ENCODE measurements at regions of chr18 and their contacts with region 1.

Region 1: GRCh38 chr18:11808001-11808855 is 43.0 kb upstream of the CHMP1B start:
- DNase-seq: peak; percentile 53 to 92
- H3K4me3 ChIP-seq: no peak overlapping the region
- H3K27ac ChIP-seq: peak overlapping the region; percentile 79
- H3K4me1 ChIP-seq: peaks cover 27% of the 10 kb centered on the region
- H3K27me3 ChIP-seq: no peaks in the 10 kb centered on the region
- CTCF ChIP-seq: no peak

Region 2: DNA sequence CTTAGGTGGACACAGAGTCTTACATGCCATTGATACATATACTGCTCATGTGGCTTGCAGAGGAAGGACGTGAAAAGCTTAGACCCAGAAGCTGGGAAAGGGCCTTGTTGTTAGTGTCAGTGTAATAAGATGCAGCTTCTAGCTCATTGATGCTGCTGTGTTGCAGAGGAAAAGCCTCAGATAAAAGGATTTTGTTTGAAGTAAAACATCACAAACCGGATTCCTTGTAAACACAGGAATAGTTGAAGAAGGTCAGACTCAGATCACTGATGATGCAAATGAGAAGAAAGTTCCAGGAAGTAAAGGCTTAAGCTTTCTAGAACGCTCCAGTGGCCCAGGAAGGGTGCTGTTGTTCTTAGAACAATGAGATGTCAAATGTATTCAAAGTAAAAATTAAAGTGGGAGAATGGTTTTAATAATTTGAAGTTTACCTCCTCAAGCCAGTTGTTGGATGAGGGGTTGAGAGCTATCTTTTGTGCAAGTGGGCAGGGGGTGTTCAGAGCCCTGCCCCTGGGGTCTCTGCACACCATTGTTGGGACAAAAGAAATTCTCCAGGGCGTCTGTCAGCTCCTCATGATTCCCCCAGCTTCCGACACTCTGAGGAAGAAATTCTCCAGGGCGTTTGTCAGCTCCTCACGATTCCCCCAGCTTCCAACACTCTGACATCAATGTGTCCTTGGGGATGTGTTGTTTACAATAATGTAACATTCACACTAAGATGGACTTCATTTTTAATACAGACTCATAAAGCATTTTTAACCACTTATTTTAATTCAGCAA is 18.3 kb before region 1 on chr18:
- CTCF ChIA-PET with region 1: no interaction called
- POLR2A ChIA-PET with region 1: no interaction called
- intact Hi-C with region 1: no loop called
- DNase-seq: no peak
- H3K4me3 ChIP-seq: no peak overlapping the region
- H3K27ac ChIP-seq: no peak overlapping the region
- H3K4me1 ChIP-seq: no peaks in the 10 kb centered on the region
- H3K27me3 ChIP-seq: no peaks in the 10 kb centered on the region
- CTCF ChIP-seq: no peak

Region 3: GRCh38 chr18:11851146-11851805 is 43.0 kb after region 1 on chr18 and contains the start of gene CHMP1B:
- CTCF ChIA-PET with region 1: no interaction called
- POLR2A ChIA-PET with region 1: no interaction called
- intact Hi-C with region 1: loop called (anchors 1 kb)
- DNase-seq: peak; percentile 89 to 97
- H3K4me3 ChIP-seq: peak within 1 kb of the TSS; percentile 98
- H3K27ac ChIP-seq: peak within 1 kb of the TSS; percentile 83
- H3K4me1 ChIP-seq: peaks cover 39% of the 10 kb centered on the region
- H3K27me3 ChIP-seq: no peaks in the 10 kb centered on the region
- CTCF ChIP-seq: no peak
- total RNA-seq, gene CHMP1B: 68.0 and 73.6 TPM in 2 replicates

Region 4: DNA sequence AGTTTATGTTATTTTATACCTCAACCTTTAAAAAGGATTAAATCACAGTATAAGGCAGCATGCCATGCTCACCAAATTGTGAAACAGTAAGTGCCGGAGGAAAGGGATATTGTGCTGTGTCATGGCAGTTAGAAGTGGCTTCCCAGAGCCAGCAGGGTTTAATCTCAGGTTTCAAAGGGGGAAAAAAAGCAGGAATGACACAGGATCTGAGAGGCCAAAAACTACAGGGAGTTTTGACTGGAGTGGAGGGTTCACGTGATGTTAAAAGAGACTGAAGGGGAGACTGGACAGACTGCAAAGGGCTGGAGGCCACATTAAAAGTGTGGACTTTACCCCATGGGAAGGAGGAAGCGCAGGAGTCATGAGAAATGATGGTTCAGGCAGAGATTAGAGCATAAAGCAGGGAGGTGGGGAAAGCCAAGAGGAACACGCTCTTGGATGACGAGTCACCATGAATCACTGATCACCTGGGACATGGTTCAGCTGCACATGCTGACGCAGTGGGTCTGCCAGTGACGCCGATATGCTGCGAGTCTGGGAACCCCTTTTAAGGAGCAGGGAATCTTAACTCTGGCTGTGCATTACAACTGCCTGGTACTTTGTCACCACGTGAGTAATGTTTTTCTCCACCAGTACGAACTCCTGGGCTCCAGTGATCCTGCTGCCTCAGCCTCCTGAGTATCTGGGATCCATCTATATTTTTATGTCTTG is 49.1 kb after region 1 on chr18:
- CTCF ChIA-PET with region 1: no interaction called
- POLR2A ChIA-PET with region 1: no interaction called
- intact Hi-C with region 1: loop called (anchors 2 kb)
- DNase-seq: peak; percentile 87 to 97
- H3K4me3 ChIP-seq: peak overlapping the region; percentile 43; the same call in 1 of the 2 replicates
- H3K27ac ChIP-seq: peak overlapping the region; percentile 97
- H3K4me1 ChIP-seq: peaks cover 62% of the 10 kb centered on the region
- H3K27me3 ChIP-seq: no peaks in the 10 kb centered on the region
- CTCF ChIP-seq: no peak

Region 5: GRCh38 chr18:11908182-11909060 is 100.2 kb after region 1 on chr18 and contains the start of gene MPPE1:
- CTCF ChIA-PET with region 1: no interaction called
- POLR2A ChIA-PET with region 1: no interaction called
- intact Hi-C with region 1: loop called (anchors 10 kb)
- DNase-seq: peak; percentile 71 to 89
- H3K4me3 ChIP-seq: peak within 1 kb of the TSS; percentile 84
- H3K27ac ChIP-seq: peak within 1 kb of the TSS; percentile 72
- H3K4me1 ChIP-seq: peaks cover 15% of the 10 kb centered on the region
- H3K27me3 ChIP-seq: no peaks in the 10 kb centered on the region
- CTCF ChIP-seq: no peak
- total RNA-seq, gene MPPE1: 40.7 and 54.9 TPM in 2 replicates

Region 6: DNA sequence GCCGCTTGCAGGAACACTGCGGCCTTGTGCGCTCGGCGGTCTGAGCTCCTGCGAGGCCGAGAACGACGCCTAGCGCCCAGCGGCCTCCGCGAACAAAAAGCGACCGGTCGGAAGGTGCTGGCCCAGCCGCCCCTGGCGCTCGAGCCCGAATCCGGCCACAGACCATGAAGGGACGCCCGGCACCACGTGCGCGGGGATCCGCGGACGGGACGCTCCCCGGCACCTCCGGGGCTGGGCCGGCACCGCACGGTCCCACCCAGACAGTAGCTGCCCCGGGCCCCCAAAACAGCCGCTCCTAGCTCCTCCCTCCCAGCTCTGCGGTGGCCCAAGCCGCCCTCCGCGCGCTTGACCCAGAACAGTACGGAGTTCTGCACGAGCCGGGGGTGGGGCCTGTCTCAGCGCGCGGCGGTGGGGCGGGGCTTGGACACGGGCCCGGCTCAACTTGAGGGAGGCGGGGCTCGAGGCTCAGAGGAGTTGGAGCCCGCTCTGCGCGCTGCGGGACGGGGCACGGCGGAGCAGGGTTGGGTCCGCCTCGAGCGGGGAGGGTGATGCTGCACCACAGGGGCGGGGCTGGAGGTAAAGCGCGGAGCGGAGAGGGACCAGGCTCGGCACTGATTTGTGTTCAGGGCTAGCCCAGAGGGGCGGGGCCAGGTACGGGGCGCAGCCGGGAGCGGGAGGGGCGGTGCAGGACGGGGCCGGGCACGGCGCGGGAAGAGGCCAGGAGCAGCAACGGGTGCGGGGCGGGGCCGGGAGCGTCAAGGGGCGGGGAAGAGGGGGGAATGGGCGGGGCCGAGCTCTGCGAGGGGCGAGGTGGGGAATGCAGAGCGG is 172.5 kb after region 1 on chr18:
- CTCF ChIA-PET with region 1: no interaction called
- POLR2A ChIA-PET with region 1: no interaction called
- intact Hi-C with region 1: no loop called
- DNase-seq: peak; percentile 95 to 100
- H3K4me3 ChIP-seq: peak overlapping the region; percentile 69
- H3K27ac ChIP-seq: peak overlapping the region; percentile 84
- H3K4me1 ChIP-seq: peaks cover 31% of the 10 kb centered on the region
- H3K27me3 ChIP-seq: no peaks in the 10 kb centered on the region
- CTCF ChIP-seq: no peak

Region 7: DNA sequence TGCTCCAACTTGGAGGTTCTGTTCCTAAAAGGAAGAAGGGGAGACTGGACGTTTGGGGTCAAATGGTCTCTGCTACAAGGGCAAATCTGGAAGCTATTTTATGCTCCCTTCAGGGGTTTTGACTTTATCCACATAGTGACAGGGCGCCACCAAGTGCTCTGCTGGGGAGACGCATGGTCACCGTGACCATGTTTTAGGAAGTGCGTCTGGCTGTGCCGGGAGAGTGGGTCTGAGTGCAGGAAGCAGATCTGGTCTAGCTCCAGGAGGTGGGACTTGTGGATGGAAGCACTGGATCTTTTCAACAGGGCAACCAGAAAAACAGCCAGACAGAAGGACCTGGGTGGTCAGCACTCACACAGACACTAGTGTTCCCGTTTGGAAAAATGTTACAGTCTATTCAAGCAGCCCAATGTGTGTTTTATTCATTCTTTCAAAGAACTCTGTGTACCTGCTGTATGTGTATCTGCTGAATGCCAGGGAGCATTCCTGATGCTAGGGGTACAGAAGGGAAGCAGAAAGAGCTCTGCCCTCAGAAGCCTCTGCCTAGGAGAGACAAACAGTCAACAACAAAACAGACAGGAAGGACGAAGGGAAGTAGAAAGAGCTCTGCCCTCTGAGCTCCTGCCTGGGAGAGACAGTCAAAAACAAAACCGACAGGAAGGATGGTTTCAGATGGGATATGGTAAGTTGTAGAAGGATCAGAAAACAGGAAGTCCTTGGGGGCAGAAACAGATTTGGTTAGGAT is 187.4 kb after region 1 on chr18:
- CTCF ChIA-PET with region 1: interaction called, 12 read pairs
- POLR2A ChIA-PET with region 1: no interaction called
- intact Hi-C with region 1: loop called (anchors 10 kb)
- DNase-seq: peak; percentile 49 to 70
- H3K4me3 ChIP-seq: no peak overlapping the region
- H3K27ac ChIP-seq: no peak overlapping the region
- H3K4me1 ChIP-seq: peaks cover 17% of the 10 kb centered on the region
- H3K27me3 ChIP-seq: no peaks in the 10 kb centered on the region
- CTCF ChIP-seq: peak; percentile 84

Region 8: DNA sequence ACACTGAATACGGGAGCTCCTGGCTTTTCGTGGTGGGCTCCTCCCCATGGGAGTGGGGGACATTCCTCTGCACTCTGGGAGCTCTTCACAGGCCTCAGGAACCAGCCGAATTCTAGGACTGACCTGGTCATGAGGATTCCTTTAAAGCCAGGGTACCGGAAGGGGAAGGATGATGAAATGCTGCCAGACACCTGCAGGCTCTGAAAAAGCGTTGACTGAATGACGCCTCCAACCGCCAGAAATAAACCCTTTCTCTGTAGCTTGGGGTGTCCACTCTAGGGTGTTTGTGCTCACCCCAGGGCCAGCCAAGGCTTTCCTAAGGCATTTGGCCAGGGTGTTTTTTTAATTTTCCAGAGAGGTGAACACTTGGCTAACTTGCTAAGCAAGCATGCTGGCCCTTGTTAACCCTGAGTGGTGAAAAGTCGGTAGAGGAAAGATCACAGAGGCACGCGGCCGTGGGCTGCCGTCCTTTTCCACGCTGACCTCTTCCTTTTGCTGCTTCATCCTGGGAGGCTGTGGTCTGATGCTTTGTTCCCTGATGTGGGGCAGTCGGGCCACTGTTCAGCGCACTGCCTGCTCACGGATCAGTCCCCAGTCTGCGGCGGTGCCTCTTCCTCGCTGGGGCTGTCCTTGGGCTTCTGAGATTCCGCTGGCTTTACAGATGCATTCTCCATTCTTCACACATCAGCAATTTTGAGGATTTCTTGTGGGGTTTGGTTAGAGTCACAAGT is 205.1 kb after region 1 on chr18:
- CTCF ChIA-PET with region 1: no interaction called
- POLR2A ChIA-PET with region 1: interaction called, 17 read pairs
- intact Hi-C with region 1: no loop called
- DNase-seq: no peak
- H3K4me3 ChIP-seq: no peak overlapping the region
- H3K27ac ChIP-seq: no peak overlapping the region
- H3K4me1 ChIP-seq: peaks cover 16% of the 10 kb centered on the region
- H3K27me3 ChIP-seq: no peaks in the 10 kb centered on the region
- CTCF ChIP-seq: no peak

Region 9: GRCh38 chr18:13597068-13597467 is 1788.8 kb after region 1 on chr18:
- CTCF ChIA-PET with region 1: no interaction called
- POLR2A ChIA-PET with region 1: interaction called, 11 read pairs
- intact Hi-C with region 1: no loop called
- DNase-seq: no peak
- H3K4me3 ChIP-seq: no peak overlapping the region
- H3K27ac ChIP-seq: no peak overlapping the region
- H3K4me1 ChIP-seq: no peaks in the 10 kb centered on the region
- H3K27me3 ChIP-seq: peaks cover 9% of the 10 kb centered on the region
- CTCF ChIP-seq: no peak

Measured in PC-9 (cell line).